Colonic mucosa (tissue), 4 donors: ENCODE measurements at regions of chr17 and their contacts with region 1.

Region 1: GRCh38 chr17:17356149-17356930 is 53.2 kb downstream of the NT5M start:
- DNase-seq: peak; percentile 76
- H3K4me3 ChIP-seq: no peak overlapping the region
- H3K27ac ChIP-seq: no peak overlapping the region
- H3K4me1 ChIP-seq: no peaks in the 10 kb centered on the region
- H3K27me3 ChIP-seq: no peaks in the 10 kb centered on the region
- CTCF ChIP-seq: peak; percentile 99

Region 2: GRCh38 chr17:17641621-17642409 is 285.5 kb after region 1 on chr17:
- intact Hi-C with region 1: loop called (anchors 1 kb)
- DNase-seq: peak; percentile 83
- H3K4me3 ChIP-seq: no peak overlapping the region
- H3K27ac ChIP-seq: no peak overlapping the region
- H3K4me1 ChIP-seq: no peaks in the 10 kb centered on the region
- H3K27me3 ChIP-seq: no peaks in the 10 kb centered on the region
- CTCF ChIP-seq: peak; percentile 89